H1 (cell line): ENCODE measurements at regions of chr6 and their contacts with region 1.

Region 1: GRCh38 chr6:133184798-133185372 is 56.3 kb upstream of the EYA4 start:
- DNase-seq: no peak
- H3K4me3 ChIP-seq: no peak overlapping the region
- H3K27ac ChIP-seq: no peak overlapping the region
- H3K4me1 ChIP-seq: 0 out of 7 replicates have a peak, but pooled peaks cover 0 to 2% (median 0%) of the 10 kb centered on the region in 4 experiments
- H3K27me3 ChIP-seq: no peaks in the 10 kb centered on the region
- CTCF ChIP-seq: peak in 1 of 3 experiments; percentile 22; a peak in 2 of 4 replicates
- EP300 ChIP-seq: no peak
- POLR2A ChIP-seq: no peak
- RAD21 ChIP-seq: peak in 1 of 2 experiments; percentile 53; a peak in 3 of 4 replicates

Region 2: GRCh38 chr6:133040094-133040802 is 144.6 kb before region 1 on chr6:
- CTCF ChIA-PET with region 1: no interaction called
- POLR2A ChIA-PET with region 1: no interaction called
- DNase-seq: no peak
- H3K4me3 ChIP-seq: no peak overlapping the region
- H3K27ac ChIP-seq: no peak overlapping the region
- H3K4me1 ChIP-seq: no peaks in the 10 kb centered on the region
- H3K27me3 ChIP-seq: no peaks in the 10 kb centered on the region
- CTCF ChIP-seq: peak in 2 of 3 experiments; percentile 47 to 58; a peak in 2 of 4 replicates
- EP300 ChIP-seq: no peak
- POLR2A ChIP-seq: no peak
- RAD21 ChIP-seq: peak; percentile 57 to 63

Region 3: DNA sequence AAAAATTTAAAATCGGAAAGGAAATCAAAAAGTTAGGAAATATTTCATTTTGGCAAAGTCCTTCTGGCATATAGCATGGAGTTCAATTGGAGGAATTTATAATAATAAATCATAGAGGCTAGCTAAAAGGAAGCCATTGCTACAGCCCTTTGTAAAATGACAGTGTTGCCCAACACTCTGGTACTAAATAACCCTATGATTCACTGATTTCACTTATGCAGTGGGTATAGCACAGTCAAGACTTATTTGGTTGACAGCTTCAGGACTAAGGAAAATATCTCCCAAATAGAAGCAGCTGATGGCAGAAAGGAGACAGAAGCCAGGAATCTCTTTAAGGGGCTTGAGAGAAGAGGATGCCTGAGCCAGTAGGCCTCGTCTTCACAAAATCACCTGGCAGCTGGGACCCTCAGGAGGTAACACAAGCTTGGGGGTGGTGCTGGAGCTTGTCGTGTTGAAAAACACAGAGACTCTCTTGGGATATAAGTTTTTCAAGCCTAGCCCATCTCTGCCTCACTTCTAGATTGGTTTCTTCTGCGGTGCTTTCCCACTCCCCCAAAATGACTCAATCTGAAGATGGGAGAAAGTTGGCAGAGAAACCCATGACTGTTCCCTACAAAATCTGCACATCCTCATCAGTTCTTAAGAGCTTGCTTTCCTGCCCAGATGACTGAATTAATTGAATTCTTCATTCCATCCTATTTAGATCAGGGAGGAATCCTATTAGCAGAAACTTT is 17.9 kb after region 1 on chr6:
- CTCF ChIA-PET with region 1: interaction called, 10 read pairs
- POLR2A ChIA-PET with region 1: no interaction called
- DNase-seq: no peak
- H3K4me3 ChIP-seq: no peak overlapping the region
- H3K27ac ChIP-seq: no peak overlapping the region
- H3K4me1 ChIP-seq: no peaks in the 10 kb centered on the region; a peak in 1 of 7 replicates
- H3K27me3 ChIP-seq: peaks cover 0 to 1% (median 0%) of the 10 kb centered on the region in 4 experiments; a peak in 1 of 7 replicates
- CTCF ChIP-seq: no peak
- EP300 ChIP-seq: no peak
- POLR2A ChIP-seq: no peak
- RAD21 ChIP-seq: no peak